ENCODE measurements at regions of chr9 and their contacts with region 1.

Region 1: GRCh38 chr9:126113756-126114408 is 212.7 kb upstream of the MVB12B start:
- DNase-seq: no peak
- H3K4me3 ChIP-seq: no peak overlapping the region
- H3K27ac ChIP-seq: no peak overlapping the region
- H3K4me1 ChIP-seq: no peaks in the 10 kb centered on the region
- H3K27me3 ChIP-seq: peaks cover 7% of the 10 kb centered on the region
- CTCF ChIP-seq: no peak

Region 2: DNA sequence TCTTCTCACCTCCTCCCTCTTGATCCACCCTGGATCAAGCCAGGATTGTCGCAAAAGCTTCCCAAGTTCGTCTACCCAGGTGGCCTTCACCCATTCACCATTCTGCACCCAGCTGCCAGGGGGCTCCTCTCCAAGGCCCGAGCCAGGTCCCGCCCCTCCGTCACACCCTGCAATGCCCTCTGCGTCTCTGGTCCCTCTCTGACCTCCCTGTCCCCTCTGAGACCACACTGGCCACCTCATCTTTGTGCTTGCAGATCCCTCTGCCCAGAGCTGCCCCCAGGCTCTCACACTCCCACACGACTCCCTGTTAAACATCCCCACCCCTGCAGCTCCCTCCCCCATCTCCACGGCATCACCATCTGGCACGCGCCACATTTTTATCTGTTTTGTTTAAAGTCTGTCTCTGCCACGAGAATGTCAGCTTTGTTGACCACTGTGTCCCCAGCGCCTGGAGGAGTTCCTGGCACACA is 123.1 kb before region 1 on chr9:
- CTCF ChIA-PET with region 1: no interaction called
- dilution Hi-C with region 1: loop called (anchors 5 kb)
- in situ Hi-C with region 1: no loop called
- intact Hi-C with region 1: no loop called
- DNase-seq: no peak
- H3K4me3 ChIP-seq: no peak overlapping the region
- H3K27ac ChIP-seq: no peak overlapping the region
- H3K4me1 ChIP-seq: no peaks in the 10 kb centered on the region
- H3K27me3 ChIP-seq: no peaks in the 10 kb centered on the region
- CTCF ChIP-seq: no peak

Region 3: GRCh38 chr9:126027566-126027965 is 86.3 kb before region 1 on chr9:
- CTCF ChIA-PET with region 1: no interaction called
- dilution Hi-C with region 1: loop called (anchors 5 kb)
- in situ Hi-C with region 1: no loop called
- intact Hi-C with region 1: no loop called
- DNase-seq: no peak
- H3K4me3 ChIP-seq: no peak overlapping the region
- H3K27ac ChIP-seq: no peak overlapping the region
- H3K4me1 ChIP-seq: no peaks in the 10 kb centered on the region
- H3K27me3 ChIP-seq: no peaks in the 10 kb centered on the region
- CTCF ChIP-seq: no peak

Region 4: DNA sequence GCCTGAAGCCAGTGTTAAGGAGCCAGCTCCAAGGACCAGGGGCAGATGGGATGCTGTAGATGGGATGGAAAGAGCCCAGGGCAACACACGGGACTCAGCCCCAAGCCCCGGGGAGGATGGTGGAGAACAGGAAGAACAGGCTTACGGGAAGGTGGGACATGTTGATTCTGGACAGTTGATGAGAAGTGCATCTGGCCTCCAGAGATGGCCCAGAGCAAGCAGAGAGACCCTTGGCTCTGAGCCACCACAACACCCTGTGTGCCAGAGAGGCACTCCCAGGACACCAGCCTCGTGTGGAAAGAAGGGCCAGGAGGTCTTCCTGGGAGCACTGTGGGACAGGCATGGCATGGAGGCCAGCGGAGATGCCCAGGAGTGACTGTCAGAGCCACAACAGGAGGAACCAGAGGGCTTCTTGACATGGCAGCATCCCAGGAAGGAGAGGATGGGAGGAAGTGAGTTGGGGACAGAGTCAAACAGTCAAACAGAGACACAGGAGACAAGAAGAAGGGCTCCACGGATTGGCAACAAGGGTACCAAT is 56.5 kb after region 1 on chr9:
- CTCF ChIA-PET with region 1: no interaction called
- dilution Hi-C with region 1: loop called (anchors 5 kb)
- in situ Hi-C with region 1: no loop called
- intact Hi-C with region 1: no loop called
- DNase-seq: no peak
- H3K4me3 ChIP-seq: no peak overlapping the region
- H3K27ac ChIP-seq: no peak overlapping the region
- H3K4me1 ChIP-seq: no peaks in the 10 kb centered on the region
- H3K27me3 ChIP-seq: peaks cover 9% of the 10 kb centered on the region
- CTCF ChIP-seq: no peak

Region 5: DNA sequence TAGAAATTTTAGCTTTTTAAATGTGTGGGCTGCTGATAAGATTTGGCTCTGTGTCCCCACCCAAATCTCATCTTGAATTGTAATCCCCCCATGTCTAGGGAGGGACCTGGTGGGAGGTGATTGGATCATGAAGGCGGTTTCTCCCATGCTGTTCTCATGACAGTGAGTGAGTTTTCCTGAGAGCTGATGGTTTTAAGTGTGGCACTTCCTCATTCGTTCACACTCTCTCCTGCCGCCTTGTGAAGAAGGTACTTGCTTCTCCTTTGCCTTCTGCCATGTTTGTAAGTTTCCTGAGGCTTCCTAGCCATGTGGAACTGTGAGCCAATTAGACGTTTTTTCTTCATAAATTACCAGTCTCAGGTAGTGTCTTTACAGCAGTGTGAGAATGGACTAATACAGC is 85.0 kb after region 1 on chr9:
- CTCF ChIA-PET with region 1: no interaction called
- dilution Hi-C with region 1: no loop called
- in situ Hi-C with region 1: no loop called
- intact Hi-C with region 1: no loop called
- DNase-seq: no peak
- H3K4me3 ChIP-seq: no peak overlapping the region
- H3K27ac ChIP-seq: no peak overlapping the region
- H3K4me1 ChIP-seq: no peaks in the 10 kb centered on the region
- H3K27me3 ChIP-seq: peaks cover 2% of the 10 kb centered on the region
- CTCF ChIP-seq: no peak

Region 6: DNA sequence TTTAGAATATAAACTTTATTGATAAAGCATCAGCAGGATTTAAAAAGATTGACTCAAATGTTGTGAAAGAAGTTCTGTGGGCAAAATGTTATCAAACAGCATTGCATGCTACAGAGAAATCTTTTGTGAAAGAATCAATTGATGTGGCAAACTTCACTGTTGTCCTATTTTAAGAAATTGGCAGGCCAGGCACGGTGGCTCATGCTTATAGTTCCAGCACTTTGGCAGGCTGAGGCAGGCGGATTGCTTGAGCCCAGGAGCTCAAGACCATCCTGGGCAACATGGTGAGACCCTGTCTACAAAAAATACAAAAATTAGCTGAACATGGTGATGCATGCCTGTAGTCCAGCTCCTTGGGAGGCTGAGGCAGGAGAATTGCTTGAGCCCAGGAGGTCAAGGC is 708.4 kb after region 1 on chr9:
- CTCF ChIA-PET with region 1: no interaction called
- dilution Hi-C with region 1: no loop called
- in situ Hi-C with region 1: no loop called
- intact Hi-C with region 1: no loop called
- DNase-seq: no peak
- H3K4me3 ChIP-seq: no peak overlapping the region
- H3K27ac ChIP-seq: no peak overlapping the region
- H3K4me1 ChIP-seq: no peaks in the 10 kb centered on the region
- H3K27me3 ChIP-seq: no peaks in the 10 kb centered on the region
- CTCF ChIP-seq: no peak

Measured in mammary epithelial cell (primary cell).